IMR-90 (cell line): ENCODE measurements at regions of chr19 and their contacts with region 1.

Region 1: DNA sequence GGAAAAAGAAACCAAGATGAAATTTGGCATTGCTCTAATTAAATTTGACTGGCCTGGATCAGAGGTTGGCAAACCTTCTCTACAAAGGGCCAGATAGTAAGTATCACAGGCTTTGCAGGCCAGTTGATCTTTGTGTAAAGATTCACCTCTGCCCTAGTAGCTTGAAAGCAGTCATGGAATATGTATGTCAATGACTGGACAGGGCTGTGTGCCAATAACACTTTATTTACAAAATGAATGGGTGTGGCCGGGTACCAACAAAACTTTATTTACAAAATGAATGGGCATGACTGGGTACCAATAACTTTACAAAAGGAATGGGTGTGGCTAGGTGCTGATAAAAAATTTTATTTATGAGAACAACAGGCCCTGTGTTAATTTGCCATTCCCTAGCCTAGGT is 20.0 kb downstream of the SIN3B start:
- DNase-seq: peak; percentile 62
- ATAC-seq: peak; percentile 43
- H3K4me3 ChIP-seq: no peak overlapping the region
- H3K27ac ChIP-seq: no peak overlapping the region
- H3K4me1 ChIP-seq: peaks cover 16% of the 10 kb centered on the region
- H3K27me3 ChIP-seq: no peaks in the 10 kb centered on the region
- CTCF ChIP-seq: no peak
- POLR2A ChIP-seq: no peak
- RAD21 ChIP-seq: no peak

Region 2: DNA sequence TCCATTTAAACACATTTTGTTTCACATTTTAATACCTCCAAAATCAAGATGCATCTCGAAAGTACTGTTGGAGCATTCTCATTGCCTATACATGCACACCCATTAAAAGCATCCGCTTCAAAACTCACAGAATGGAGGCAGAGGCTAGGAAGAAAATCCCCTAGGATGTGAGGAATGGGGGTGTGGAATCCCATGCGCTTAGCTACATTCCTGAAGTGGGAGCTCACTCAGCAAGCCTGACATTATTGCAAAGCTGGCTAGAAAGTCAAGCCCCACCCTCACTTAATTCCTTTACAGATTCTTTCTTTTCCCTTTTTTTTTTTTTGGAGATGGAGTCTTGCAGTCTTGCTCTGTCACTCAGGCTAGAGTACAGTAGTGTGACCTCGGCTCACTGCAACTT is 668.6 kb before region 1 on chr19:
- CTCF ChIA-PET with region 1: no interaction called
- POLR2A ChIA-PET with region 1: no interaction called
- dilution Hi-C with region 1: no loop called
- in situ Hi-C with region 1: no loop called
- intact Hi-C with region 1: no loop called
- DNase-seq: peak; percentile 86
- ATAC-seq: peak; percentile 72
- H3K4me3 ChIP-seq: no peak overlapping the region
- H3K27ac ChIP-seq: peak overlapping the region; percentile 50; the same call in 1 of the 2 replicates
- H3K4me1 ChIP-seq: peaks cover 5% of the 10 kb centered on the region; the same call in 1 of the 2 replicates
- H3K27me3 ChIP-seq: no peaks in the 10 kb centered on the region
- CTCF ChIP-seq: no peak
- POLR2A ChIP-seq: no peak
- RAD21 ChIP-seq: no peak

Region 3: DNA sequence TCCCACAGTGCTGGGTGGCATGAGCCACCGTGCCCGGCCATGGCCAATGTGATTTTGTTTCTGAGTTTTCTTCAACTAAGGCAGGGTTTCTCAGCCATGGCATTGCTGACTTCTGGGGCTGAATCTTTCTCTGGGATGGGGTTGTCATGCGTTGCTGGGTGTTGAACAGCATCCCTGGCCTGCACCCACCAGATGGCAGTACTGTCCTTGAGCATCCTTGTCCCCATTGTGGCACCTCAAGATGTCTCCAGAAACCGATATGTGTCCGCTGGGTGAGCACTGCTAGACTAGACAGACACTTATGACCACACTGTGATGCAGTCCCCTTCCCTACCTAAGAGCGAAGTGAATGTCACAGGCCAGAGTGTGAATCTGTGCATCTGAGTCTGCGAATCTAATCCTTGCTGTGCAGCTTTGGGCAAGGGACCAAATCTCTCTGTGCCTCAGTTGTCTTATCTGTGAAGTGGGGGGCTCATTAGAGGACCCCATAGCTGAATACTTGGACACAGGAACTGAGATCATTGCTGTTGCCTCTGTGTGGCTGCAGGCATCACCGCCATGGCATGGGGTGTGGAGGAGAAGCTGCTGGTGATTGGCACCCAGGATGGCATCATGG is 70.3 kb before region 1 on chr19:
- CTCF ChIA-PET with region 1: no interaction called
- POLR2A ChIA-PET with region 1: no interaction called
- dilution Hi-C with region 1: no loop called
- in situ Hi-C with region 1: no loop called
- intact Hi-C with region 1: loop called (anchors 5 kb)
- DNase-seq: peak; percentile 55
- ATAC-seq: peak; percentile 88
- H3K4me3 ChIP-seq: no peak overlapping the region
- H3K27ac ChIP-seq: no peak overlapping the region
- H3K4me1 ChIP-seq: no peaks in the 10 kb centered on the region
- H3K27me3 ChIP-seq: peaks cover 3% of the 10 kb centered on the region; the same call in 1 of the 2 replicates
- CTCF ChIP-seq: peak; percentile 60
- POLR2A ChIP-seq: no peak
- RAD21 ChIP-seq: peak; percentile 79

Region 4: DNA sequence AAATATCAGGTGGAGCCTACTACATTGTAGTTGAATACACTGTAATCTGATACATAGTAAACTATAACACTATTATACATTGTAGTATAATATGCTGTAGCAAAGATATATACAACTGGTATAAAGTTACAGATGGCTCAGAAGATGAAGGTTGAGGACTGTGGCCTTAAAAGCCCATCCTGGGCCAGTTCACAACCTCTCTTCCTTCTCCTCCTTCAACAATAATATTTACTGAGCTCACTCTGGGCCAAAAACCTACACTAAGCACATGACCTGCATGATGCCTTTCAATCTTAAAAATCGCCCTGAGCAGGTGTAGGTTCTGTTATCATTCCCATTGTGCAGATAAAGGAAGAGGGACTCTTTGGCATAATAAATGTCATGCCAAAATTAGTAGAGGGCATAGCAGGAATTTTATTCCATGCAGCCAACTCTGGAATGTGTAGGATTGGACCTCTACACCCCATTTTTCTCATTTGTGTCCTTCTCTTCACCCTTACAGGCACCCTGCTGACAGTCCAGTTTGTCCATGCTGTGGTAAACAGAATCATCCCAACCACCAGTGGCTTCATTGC is 34.6 kb before region 1 on chr19:
- CTCF ChIA-PET with region 1: no interaction called
- POLR2A ChIA-PET with region 1: interaction called, 11 read pairs
- dilution Hi-C with region 1: no loop called
- in situ Hi-C with region 1: no loop called
- intact Hi-C with region 1: no loop called
- DNase-seq: peak; percentile 46
- ATAC-seq: no peak
- H3K4me3 ChIP-seq: no peak overlapping the region
- H3K27ac ChIP-seq: no peak overlapping the region
- H3K4me1 ChIP-seq: no peaks in the 10 kb centered on the region
- H3K27me3 ChIP-seq: peaks cover 2% of the 10 kb centered on the region; the same call in 1 of the 2 replicates
- CTCF ChIP-seq: no peak
- POLR2A ChIP-seq: no peak
- RAD21 ChIP-seq: no peak

Region 5: GRCh38 chr19:16829010-16829821 is 20.0 kb before region 1 on chr19 and contains the start of gene SIN3B:
- CTCF ChIA-PET with region 1: no interaction called
- POLR2A ChIA-PET with region 1: interaction called, 10 read pairs
- dilution Hi-C with region 1: no loop called
- in situ Hi-C with region 1: no loop called
- intact Hi-C with region 1: no loop called
- DNase-seq: peak; percentile 82
- ATAC-seq: peak; percentile 92
- H3K4me3 ChIP-seq: peak within 1 kb of the TSS; percentile 98
- H3K27ac ChIP-seq: peak within 1 kb of the TSS; percentile 82
- H3K4me1 ChIP-seq: peaks cover 10% of the 10 kb centered on the region; the same call in 1 of the 2 replicates
- H3K27me3 ChIP-seq: no peaks in the 10 kb centered on the region
- CTCF ChIP-seq: no peak
- POLR2A ChIP-seq: peak; percentile 63
- RAD21 ChIP-seq: no peak
- total RNA-seq, gene SIN3B: 7.9 and 9.2 TPM in 2 replicates